CD8-positive, alpha-beta T cell (primary cell): ENCODE measurements at regions of chr3 and their contacts with region 1.

Region 1: DNA sequence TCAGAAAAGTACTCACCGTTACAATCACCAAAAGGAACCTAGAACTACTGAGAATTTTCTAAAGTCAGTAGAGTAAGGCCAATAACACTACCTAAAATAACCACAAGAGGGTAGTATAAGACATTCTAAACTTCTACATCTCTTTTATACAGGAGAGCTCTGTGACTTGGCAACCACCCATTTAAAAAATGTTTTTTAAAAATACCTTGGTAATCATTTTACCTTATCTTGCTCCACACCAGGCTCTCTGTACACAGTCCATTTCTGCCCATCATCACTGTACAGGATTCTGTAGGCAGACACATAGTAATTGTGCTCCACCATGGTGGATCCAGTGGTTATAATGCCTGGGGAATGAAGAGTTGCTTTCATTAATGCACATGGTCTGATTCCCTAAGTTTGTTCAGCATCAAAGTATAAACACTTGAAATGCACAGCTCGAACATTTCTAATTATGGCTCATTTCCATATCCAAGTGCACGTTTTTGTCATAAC is 54.5 kb downstream of the ST3GAL6 start:
- DNase-seq: peak in 2 of 9 experiments; percentile 34 to 51
- ATAC-seq: peak; percentile 78
- H3K4me3 ChIP-seq: no peak overlapping the region
- H3K4me3 Mint-ChIP-seq: no peak overlapping the region
- H3K27ac ChIP-seq: no peak overlapping the region
- H3K27ac Mint-ChIP-seq: no peak overlapping the region
- H3K4me1 ChIP-seq: no peaks in the 10 kb centered on the region
- H3K4me1 Mint-ChIP-seq: no peaks in the 10 kb centered on the region
- H3K27me3 ChIP-seq: no peaks in the 10 kb centered on the region
- H3K27me3 Mint-ChIP-seq: no peaks in the 10 kb centered on the region
- CTCF ChIP-seq: peak; percentile 91

Region 2: GRCh38 chr3:97793420-97794019 is 1024.1 kb before region 1 on chr3:
- CTCF ChIA-PET with region 1: no interaction called
- POLR2A ChIA-PET with region 1: no interaction called
- intact Hi-C with region 1: loop called in 1 of 2 experiments (anchors 5 kb)
- DNase-seq: peak in 3 of 9 experiments; percentile 14 to 78 (median 73)
- ATAC-seq: peak; percentile 71
- H3K4me3 ChIP-seq: no peak overlapping the region
- H3K4me3 Mint-ChIP-seq: no peak overlapping the region
- H3K27ac ChIP-seq: no peak overlapping the region
- H3K27ac Mint-ChIP-seq: no peak overlapping the region
- H3K4me1 ChIP-seq: no peaks in the 10 kb centered on the region
- H3K4me1 Mint-ChIP-seq: no peaks in the 10 kb centered on the region
- H3K27me3 ChIP-seq: no peaks in the 10 kb centered on the region
- H3K27me3 Mint-ChIP-seq: no peaks in the 10 kb centered on the region
- CTCF ChIP-seq: peak; percentile 81

Region 3: DNA sequence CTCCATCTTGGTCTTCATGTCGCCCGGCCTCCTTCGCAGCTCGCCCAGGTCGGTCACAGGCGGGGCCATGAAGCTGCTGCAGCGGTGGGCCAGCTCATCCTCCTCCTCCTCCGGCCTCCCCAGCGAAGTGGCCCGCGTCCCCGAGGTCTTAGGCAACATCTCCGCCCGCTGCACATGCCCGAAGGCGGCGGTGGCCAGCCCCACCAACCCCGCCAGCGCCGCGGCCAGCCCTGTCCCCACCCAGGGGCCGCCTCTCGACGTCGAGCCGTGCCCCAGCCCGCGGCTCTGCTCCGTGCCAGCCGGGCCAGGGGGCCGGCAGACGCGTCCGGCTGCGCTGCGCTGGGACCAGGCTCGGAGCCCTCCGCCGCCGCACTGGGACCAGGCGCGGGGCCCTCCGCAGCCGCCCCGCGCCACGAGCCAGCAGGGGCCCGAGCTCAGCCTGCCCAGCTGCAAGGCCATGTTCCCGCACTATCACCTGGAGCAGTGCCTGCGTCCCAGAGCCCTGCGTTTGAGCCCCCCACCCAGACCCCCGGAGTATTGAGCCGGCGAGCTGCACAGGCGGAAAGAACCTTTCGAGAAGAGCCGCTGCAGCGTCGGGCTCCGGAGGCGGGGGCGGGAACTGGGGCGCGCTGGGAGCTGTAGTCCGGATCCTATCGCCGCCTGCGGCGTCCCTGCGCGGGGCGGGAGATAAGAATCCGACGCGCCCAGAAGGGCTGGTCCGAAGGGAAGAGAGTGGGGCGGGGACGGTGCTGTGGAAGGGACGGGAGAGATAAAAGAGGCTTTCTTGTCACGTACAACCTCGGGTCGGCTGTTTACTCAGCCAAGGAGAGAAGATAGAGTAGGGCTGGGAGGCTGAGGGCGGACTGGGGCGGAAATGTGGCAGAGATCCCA is 224.3 kb before region 1 on chr3 and contains the start of gene CPOX:
- CTCF ChIA-PET with region 1: no interaction called
- POLR2A ChIA-PET with region 1: no interaction called
- intact Hi-C with region 1: loop called in 1 of 2 experiments (anchors 2 kb)
- DNase-seq: peak; percentile 54 to 87 (median 80)
- ATAC-seq: peak; percentile 96
- H3K4me3 ChIP-seq: peak within 1 kb of the TSS; percentile 70 to 92
- H3K4me3 Mint-ChIP-seq: peak within 1 kb of the TSS; percentile 99
- H3K27ac ChIP-seq: peak within 1 kb of the TSS; percentile 61 to 74
- H3K27ac Mint-ChIP-seq: peak within 1 kb of the TSS; percentile 95
- H3K4me1 ChIP-seq: peaks cover 15% of the 10 kb centered on the region
- H3K4me1 Mint-ChIP-seq: peaks cover 35% of the 10 kb centered on the region
- H3K27me3 ChIP-seq: no peaks in the 10 kb centered on the region
- H3K27me3 Mint-ChIP-seq: no peaks in the 10 kb centered on the region
- CTCF ChIP-seq: no peak
- total RNA-seq, gene CPOX: 7.5 to 7.7 TPM

Region 4: GRCh38 chr3:98744283-98744682 is 73.3 kb before region 1 on chr3:
- CTCF ChIA-PET with region 1: no interaction called
- POLR2A ChIA-PET with region 1: no interaction called
- intact Hi-C with region 1: no loop called
- DNase-seq: no peak
- ATAC-seq: no peak
- H3K4me3 ChIP-seq: no peak overlapping the region
- H3K4me3 Mint-ChIP-seq: no peak overlapping the region
- H3K27ac ChIP-seq: no peak overlapping the region
- H3K27ac Mint-ChIP-seq: no peak overlapping the region
- H3K4me1 ChIP-seq: no peaks in the 10 kb centered on the region
- H3K4me1 Mint-ChIP-seq: no peaks in the 10 kb centered on the region
- H3K27me3 ChIP-seq: no peaks in the 10 kb centered on the region
- H3K27me3 Mint-ChIP-seq: peaks cover 10% of the 10 kb centered on the region
- CTCF ChIP-seq: no peak

Region 5: GRCh38 chr3:98994128-98994762 is 176.7 kb after region 1 on chr3:
- CTCF ChIA-PET with region 1: interaction called, 5 read pairs
- POLR2A ChIA-PET with region 1: no interaction called
- intact Hi-C with region 1: loop called in 1 of 2 experiments (anchors 5 kb)
- DNase-seq: no peak
- ATAC-seq: no peak
- H3K4me3 ChIP-seq: no peak overlapping the region
- H3K4me3 Mint-ChIP-seq: no peak overlapping the region
- H3K27ac ChIP-seq: no peak overlapping the region
- H3K27ac Mint-ChIP-seq: no peak overlapping the region
- H3K4me1 ChIP-seq: no peaks in the 10 kb centered on the region
- H3K4me1 Mint-ChIP-seq: no peaks in the 10 kb centered on the region
- H3K27me3 ChIP-seq: no peaks in the 10 kb centered on the region
- H3K27me3 Mint-ChIP-seq: no peaks in the 10 kb centered on the region
- CTCF ChIP-seq: no peak

Region 6: DNA sequence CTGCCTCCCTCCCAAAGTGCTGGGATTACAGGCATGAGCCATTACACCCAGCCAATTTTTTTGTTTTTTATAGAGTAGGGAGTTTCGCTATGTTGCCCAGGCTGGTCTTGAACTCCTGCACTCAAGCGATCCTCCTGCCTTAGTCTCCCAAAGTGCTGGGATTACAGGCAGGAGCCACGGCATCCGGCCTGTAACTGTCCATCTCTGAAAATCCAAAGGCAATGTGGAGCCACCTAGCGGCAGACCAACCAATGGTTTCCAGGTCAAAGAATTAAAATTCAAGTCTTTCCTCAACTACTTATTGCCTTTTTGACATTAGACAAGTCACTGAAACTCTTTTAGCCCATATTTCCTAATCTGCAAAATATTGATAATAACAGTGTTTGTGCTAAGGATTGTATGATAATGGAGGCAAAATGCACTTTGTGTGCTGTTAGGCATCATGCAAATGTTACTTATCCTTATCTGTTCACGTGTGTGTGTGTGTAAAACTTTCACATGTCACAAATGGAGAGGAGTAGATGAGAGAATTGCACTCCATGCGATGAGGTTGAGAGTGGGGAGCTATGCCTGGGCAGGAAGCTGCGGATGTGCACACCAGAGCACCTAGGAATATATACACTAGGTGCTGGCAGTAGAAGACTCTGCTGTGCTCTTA is 869.5 kb after region 1 on chr3:
- CTCF ChIA-PET with region 1: interaction called, 4 read pairs
- POLR2A ChIA-PET with region 1: no interaction called
- intact Hi-C with region 1: loop called (anchors 5 kb)
- DNase-seq: peak in 4 of 9 experiments; percentile 5 to 16 (median 8)
- ATAC-seq: no peak
- H3K4me3 ChIP-seq: no peak overlapping the region
- H3K4me3 Mint-ChIP-seq: no peak overlapping the region
- H3K27ac ChIP-seq: no peak overlapping the region
- H3K27ac Mint-ChIP-seq: no peak overlapping the region
- H3K4me1 ChIP-seq: no peaks in the 10 kb centered on the region
- H3K4me1 Mint-ChIP-seq: no peaks in the 10 kb centered on the region
- H3K27me3 ChIP-seq: no peaks in the 10 kb centered on the region
- H3K27me3 Mint-ChIP-seq: peaks cover 15% of the 10 kb centered on the region
- CTCF ChIP-seq: no peak

Region 7: DNA sequence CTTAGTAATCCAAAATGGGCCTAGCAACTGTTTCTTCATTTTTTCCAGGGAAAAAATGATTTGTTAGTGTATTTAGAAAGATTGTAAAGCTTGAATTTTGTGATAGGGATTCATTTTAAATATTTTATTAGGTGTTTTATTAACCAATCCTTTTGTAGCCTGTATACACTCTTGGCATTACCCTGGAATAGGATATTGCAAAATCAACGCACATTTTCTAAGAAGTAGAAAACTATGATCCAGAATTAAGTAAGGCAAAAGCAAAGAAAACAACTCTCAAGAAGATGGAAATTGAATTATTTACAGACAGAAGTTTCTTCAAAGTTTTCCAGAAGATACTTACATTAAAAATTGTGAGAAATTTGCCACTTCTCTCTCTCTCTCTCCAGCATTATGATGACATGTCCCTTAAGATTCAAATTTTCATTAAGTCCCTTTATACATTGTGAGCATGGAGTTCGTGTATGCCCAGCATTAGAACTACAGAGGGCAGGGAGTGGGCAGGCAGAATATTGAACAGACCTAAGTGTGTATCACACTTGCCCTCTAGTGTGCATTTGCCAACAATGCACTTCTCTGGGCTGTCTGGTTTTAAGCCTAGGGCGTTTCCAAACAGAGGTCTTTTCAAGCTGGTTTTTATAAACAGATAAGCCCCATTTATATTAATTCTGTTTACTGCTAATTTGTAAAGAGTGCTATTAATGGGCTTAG is 971.6 kb after region 1 on chr3:
- CTCF ChIA-PET with region 1: no interaction called
- POLR2A ChIA-PET with region 1: no interaction called
- intact Hi-C with region 1: loop called in 1 of 2 experiments (anchors 1 kb)
- DNase-seq: peak in 3 of 9 experiments; percentile 11 to 38 (median 24)
- ATAC-seq: peak; percentile 71
- H3K4me3 ChIP-seq: no peak overlapping the region
- H3K4me3 Mint-ChIP-seq: no peak overlapping the region
- H3K27ac ChIP-seq: no peak overlapping the region
- H3K27ac Mint-ChIP-seq: no peak overlapping the region
- H3K4me1 ChIP-seq: no peaks in the 10 kb centered on the region
- H3K4me1 Mint-ChIP-seq: no peaks in the 10 kb centered on the region
- H3K27me3 ChIP-seq: no peaks in the 10 kb centered on the region
- H3K27me3 Mint-ChIP-seq: peaks cover 8% of the 10 kb centered on the region
- CTCF ChIP-seq: peak; percentile 39